Left cardiac atrium (tissue), 4 donors: ENCODE measurements at regions of chr1 and their contacts with region 1.

Region 1: GRCh38 chr1:66764994-66765578 is 12.8 kb downstream of the DYNLT5 start:
- DNase-seq: no peak
- ATAC-seq: peak in 1 of 2 donors; percentile 49

Region 2: GRCh38 chr1:67149179-67149770 is 384.2 kb after region 1 on chr1:
- intact Hi-C with region 1: loop called (anchors 2 to 5 kb)
- DNase-seq: peak; percentile 61
- ATAC-seq: peak; percentile 91 to 96

Region 3: DNA sequence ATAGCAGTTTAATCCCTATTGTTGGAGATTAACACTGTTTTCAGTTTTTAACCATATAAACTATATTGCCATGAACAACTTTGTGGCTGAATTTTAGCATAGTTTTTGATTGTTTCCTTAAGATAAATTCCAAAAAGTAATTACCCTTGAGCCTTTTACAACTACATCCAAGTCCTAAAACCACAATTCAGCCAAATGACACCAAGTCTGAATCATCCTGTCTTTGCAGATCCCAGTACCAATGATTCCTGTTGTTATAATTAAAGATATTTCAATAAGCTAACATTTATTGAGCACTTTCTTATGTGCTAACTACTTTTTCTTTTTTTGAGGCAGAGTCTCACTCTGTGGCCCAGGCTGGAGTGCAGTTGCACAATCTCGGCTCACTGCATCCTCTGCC is 436.8 kb after region 1 on chr1:
- intact Hi-C with region 1: no loop called
- DNase-seq: no peak
- ATAC-seq: no peak

Region 4: GRCh38 chr1:67214420-67215174 is 449.5 kb after region 1 on chr1:
- intact Hi-C with region 1: loop called in 1 of 2 experiments (anchors 5 kb)
- DNase-seq: no peak
- ATAC-seq: no peak

Region 5: DNA sequence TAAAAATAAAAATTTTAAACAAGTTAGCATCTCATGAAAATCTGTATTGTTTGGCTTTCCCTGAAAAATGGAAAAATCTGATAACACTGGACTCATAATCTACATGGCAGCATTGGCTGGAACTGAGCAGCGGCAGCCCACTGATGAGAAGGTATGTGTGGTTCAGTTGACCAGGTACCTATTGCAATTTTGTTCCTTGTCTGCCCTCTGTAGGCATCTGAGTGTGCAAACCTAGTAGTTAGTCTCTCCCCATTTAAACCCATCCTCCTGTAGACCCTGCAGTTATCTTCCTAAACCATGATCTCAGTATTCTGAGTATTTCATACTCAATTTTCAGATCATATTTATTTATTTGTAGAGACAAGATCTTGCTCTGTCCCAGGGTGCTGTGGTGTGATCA is 724.6 kb after region 1 on chr1:
- intact Hi-C with region 1: loop called in 1 of 2 experiments (anchors 10 kb)
- DNase-seq: no peak
- ATAC-seq: peak; percentile 69 to 84